ENCODE measurements at regions of chr6 and their contacts with region 1.

Region 1: DNA sequence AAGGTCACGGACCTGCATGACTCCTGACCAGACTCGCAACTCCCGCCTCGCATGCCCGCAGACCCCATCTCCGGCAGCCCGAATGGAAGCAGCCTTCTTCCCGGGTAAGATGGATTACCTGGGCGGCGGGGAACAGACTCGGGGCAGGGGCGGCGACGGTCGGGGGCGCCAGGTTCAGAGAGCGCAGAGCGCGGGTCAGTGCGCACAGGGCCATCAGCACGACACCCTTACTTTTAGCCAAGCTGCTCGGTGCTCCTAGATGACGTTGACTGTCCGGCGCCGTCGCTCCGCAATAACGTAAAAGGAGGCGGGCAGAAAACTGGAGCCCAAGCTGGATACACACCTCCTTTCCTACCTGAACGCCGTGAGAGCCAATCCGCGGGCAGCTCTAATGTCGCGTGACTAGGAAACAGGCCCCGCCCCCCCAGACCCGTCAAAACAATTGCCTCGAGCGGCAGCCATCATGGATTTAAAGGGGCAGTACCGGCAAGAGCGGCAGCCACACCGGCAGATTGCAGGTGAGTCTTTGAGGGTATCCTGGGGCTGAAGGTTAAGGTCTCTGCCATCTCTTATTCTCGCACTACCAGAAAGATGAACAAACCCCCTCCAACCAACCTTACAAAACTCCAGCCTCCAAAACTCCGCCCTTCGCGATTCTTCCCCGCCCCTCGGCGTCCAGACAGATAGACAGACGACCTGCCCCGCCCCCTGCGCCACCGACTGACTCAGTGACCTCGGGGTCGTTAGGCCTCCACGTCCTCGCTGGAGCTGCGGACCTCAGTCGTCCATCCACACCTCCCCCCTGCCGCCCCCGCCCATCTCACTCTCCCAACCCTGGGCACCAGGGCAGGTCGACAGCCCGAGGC is at the starts of genes KLC4 and MRPL2:
- DNase-seq: peak; percentile 99
- ATAC-seq: peak; percentile 82
- H3K4me3 ChIP-seq: peak within 1 kb of the TSS; percentile 74 to 99 (median 93)
- H3K27ac ChIP-seq: peak within 1 kb of the TSS; percentile 91
- H3K4me1 ChIP-seq: peaks cover 37% of the 10 kb centered on the region
- H3K27me3 ChIP-seq: no peaks in the 10 kb centered on the region; a peak in 1 of 5 replicates
- CTCF ChIP-seq: peak; percentile 11; the same call in 1 of the 2 replicates
- EP300 ChIP-seq: peak in 1 of 2 experiments; percentile 18; a peak in 1 of 4 replicates
- POLR2A ChIP-seq: peak in 1 of 2 experiments; percentile 93; a peak in 2 of 4 replicates
- RAD21 ChIP-seq: 0 out of 2 replicates have a peak, but pooled peaks have one; percentile 13
- total RNA-seq, gene KLC4: 45.4 and 45.8 TPM in 2 replicates
- total RNA-seq, gene MRPL2: 56.1 and 56.8 TPM in 2 replicates

Region 2: DNA sequence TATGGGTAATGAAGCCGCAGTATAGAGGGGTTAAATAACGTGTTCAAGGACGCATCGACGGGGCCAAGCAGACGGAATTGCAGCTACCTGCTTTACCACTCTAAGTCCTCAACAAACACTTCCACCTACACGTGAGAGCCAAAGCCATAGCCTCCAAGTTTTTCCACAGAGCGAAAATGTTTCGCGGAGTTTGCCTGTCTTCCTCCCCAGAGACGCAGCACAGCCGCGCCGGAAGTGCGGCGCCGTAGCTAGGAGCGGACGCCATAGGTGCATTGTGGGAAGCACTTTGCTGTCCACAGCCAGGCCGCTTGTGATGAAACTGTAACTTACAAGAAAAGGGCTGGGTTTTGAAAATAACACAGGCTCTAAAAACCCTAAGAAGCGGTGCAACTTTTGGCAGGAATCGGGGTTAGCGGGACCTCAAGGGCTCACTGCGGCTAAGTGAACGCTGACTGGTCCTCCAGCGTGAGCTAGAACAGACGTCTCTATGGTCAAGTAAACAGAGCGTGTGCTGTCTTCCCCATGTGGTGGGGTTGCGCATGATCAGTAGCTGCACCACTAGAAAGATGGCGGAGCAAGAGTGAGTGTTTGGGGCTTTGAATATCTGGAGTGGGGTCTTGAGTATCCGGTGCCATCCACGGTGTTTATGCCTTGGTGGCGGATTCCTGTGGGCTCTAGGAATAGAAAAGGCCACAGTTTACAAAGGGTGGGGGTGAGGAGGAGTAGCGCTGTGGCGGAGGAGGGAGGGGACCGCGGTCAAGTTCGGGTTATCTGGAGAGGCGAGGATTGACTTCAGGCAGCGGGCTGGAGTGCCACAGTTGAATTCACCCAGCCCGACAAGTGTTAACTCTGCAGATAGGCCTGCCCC is 179.8 kb before region 1 on chr6 and contains the start of gene RPL7L1:
- CTCF ChIA-PET with region 1: no interaction called
- POLR2A ChIA-PET with region 1: interaction called, 12 read pairs
- in situ Hi-C with region 1: no loop called
- intact Hi-C with region 1: no loop called
- DNase-seq: peak; percentile 95
- ATAC-seq: peak; percentile 94
- H3K4me3 ChIP-seq: peak within 1 kb of the TSS; percentile 85 to 92 (median 89)
- H3K27ac ChIP-seq: peak within 1 kb of the TSS; percentile 93
- H3K4me1 ChIP-seq: peaks cover 65% of the 10 kb centered on the region
- H3K27me3 ChIP-seq: no peaks in the 10 kb centered on the region; a peak in 1 of 5 replicates
- CTCF ChIP-seq: no peak; the same call in none of the 2 replicates
- EP300 ChIP-seq: peak; percentile 17 to 20; a peak in 2 of 4 replicates
- POLR2A ChIP-seq: peak; percentile 92 to 98
- RAD21 ChIP-seq: peak; percentile 25; the same call in 1 of the 2 replicates
- total RNA-seq, gene RPL7L1: 179 and 228 TPM in 2 replicates

Region 3: GRCh38 chr6:42963855-42964605 is 95.4 kb before region 1 on chr6:
- CTCF ChIA-PET with region 1: no interaction called
- POLR2A ChIA-PET with region 1: interaction called, 11 read pairs
- in situ Hi-C with region 1: no loop called
- intact Hi-C with region 1: no loop called
- DNase-seq: peak; percentile 76
- ATAC-seq: peak; percentile 44
- H3K4me3 ChIP-seq: no peak overlapping the region
- H3K27ac ChIP-seq: no peak overlapping the region
- H3K4me1 ChIP-seq: peaks cover 35% of the 10 kb centered on the region
- H3K27me3 ChIP-seq: no peaks in the 10 kb centered on the region; a peak in 1 of 5 replicates
- CTCF ChIP-seq: peak; percentile 72
- EP300 ChIP-seq: no peak
- POLR2A ChIP-seq: no peak
- RAD21 ChIP-seq: peak; percentile 62

Region 4: DNA sequence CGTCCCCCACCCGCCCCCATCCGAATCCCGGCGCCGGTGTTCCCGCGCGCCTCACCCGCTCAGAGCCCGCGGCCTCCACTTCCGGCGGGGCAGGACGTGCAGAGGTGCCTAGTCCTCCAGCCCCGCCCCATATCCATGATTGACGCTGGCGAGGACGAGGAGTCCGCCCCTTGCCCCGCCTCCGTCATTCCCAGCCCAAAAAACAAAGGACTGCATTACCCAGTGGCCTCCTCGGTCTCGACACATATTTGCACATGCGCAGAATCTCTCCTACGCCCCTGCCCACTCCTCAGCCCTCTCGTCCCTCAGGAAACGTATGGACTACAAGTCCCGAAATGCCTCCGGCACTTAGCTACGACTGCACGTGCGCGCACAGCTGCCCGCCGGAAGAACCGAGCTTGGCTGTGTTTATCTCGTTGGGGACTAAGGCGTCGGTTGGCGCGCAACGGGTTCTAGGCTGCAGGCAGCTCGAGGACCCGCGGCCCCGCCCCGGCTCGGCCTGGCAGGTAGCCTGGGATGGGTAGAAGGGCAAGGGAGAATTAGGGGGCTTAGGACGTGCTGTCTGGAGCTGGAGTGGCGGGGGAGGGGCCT is 45.5 kb before region 1 on chr6 and contains the starts of genes KLHDC3 and MEA1:
- CTCF ChIA-PET with region 1: no interaction called
- POLR2A ChIA-PET with region 1: interaction called, 76 read pairs
- in situ Hi-C with region 1: no loop called
- intact Hi-C with region 1: loop called (anchors 2 kb)
- DNase-seq: peak; percentile 100
- ATAC-seq: peak; percentile 94
- H3K4me3 ChIP-seq: peak within 1 kb of the TSS; percentile 88 to 93 (median 91)
- H3K27ac ChIP-seq: peak within 1 kb of the TSS; percentile 44
- H3K4me1 ChIP-seq: peaks cover 38% of the 10 kb centered on the region
- H3K27me3 ChIP-seq: no peaks in the 10 kb centered on the region; a peak in 1 of 5 replicates
- CTCF ChIP-seq: no peak
- EP300 ChIP-seq: no peak; a peak in 1 of 4 replicates
- POLR2A ChIP-seq: peak in 1 of 2 experiments; percentile 68; a peak in 2 of 4 replicates
- RAD21 ChIP-seq: no peak
- total RNA-seq, gene KLHDC3: 91.5 and 92.5 TPM in 2 replicates
- total RNA-seq, gene MEA1: 86.2 and 110 TPM in 2 replicates

Region 5: GRCh38 chr6:43070028-43070632 is 10.7 kb after region 1 on chr6:
- CTCF ChIA-PET with region 1: no interaction called
- POLR2A ChIA-PET with region 1: interaction called, 103 read pairs
- in situ Hi-C with region 1: no loop called
- intact Hi-C with region 1: no loop called
- DNase-seq: peak; percentile 83
- ATAC-seq: peak; percentile 93
- H3K4me3 ChIP-seq: no peak overlapping the region
- H3K27ac ChIP-seq: peak overlapping the region; percentile 7
- H3K4me1 ChIP-seq: peaks cover 12% of the 10 kb centered on the region
- H3K27me3 ChIP-seq: no peaks in the 10 kb centered on the region
- CTCF ChIP-seq: peak; percentile 72
- EP300 ChIP-seq: no peak
- POLR2A ChIP-seq: no peak
- RAD21 ChIP-seq: peak; percentile 83

Region 6: GRCh38 chr6:43096451-43097097 is 37.2 kb after region 1 on chr6:
- CTCF ChIA-PET with region 1: no interaction called
- POLR2A ChIA-PET with region 1: interaction called, 22 read pairs
- in situ Hi-C with region 1: no loop called
- intact Hi-C with region 1: no loop called
- DNase-seq: no peak
- ATAC-seq: peak; percentile 46
- H3K4me3 ChIP-seq: peak overlapping the region in 2 of 3 experiments; percentile 9 to 42; a peak in 1 of 6 replicates
- H3K27ac ChIP-seq: peak overlapping the region; percentile 41
- H3K4me1 ChIP-seq: peaks cover 64% of the 10 kb centered on the region
- H3K27me3 ChIP-seq: no peaks in the 10 kb centered on the region; a peak in 1 of 5 replicates
- CTCF ChIP-seq: no peak
- EP300 ChIP-seq: no peak
- POLR2A ChIP-seq: no peak
- RAD21 ChIP-seq: no peak

Region 7: DNA sequence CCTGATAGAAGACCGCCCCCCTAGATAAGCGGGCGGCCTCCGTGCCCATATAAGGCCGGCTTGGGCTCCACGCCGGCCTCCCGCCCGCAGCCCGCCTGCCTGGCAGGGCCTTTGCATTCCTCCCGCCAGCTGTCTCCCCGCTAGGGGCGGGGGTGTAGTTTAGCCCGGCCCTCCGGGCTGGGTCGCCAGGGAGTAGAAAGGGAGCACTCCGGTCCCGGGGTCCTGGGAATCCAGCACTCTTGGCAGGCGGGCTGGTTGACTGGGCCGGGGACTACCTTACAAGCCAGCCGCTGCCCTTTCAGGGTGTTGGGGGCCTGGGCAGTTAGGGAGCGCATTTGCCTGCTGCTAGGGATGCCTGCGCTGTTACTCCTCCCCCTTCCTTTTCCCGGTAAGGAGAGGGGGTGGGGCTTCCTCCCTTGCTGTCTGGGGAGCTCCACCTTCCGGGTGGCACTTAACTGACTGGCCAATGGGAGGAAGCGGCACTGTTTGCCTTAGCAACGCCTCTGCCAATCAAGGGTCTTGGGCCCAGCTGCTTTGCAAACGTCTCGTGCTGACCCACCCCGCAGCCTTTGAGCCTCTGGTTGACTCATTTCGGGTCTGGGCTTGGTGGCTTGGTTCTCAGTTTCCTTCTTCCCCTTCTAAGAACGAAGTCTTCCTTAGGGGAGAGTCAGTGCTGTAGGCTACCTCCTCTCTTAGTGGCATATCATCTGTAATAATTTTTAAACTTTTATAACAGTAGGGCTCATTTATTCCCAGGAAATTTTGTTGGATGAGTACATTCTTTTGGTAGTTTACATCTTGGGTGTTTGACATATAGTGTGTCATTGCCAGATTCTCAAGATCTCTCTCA is 115.1 kb after region 1 on chr6:
- CTCF ChIA-PET with region 1: no interaction called
- POLR2A ChIA-PET with region 1: interaction called, 16 read pairs
- in situ Hi-C with region 1: no loop called
- intact Hi-C with region 1: no loop called
- DNase-seq: peak; percentile 99
- ATAC-seq: peak; percentile 76
- H3K4me3 ChIP-seq: peak overlapping the region; percentile 3 to 97 (median 95); a peak in 4 of 6 replicates
- H3K27ac ChIP-seq: peak overlapping the region; percentile 57
- H3K4me1 ChIP-seq: peaks cover 37% of the 10 kb centered on the region
- H3K27me3 ChIP-seq: no peaks in the 10 kb centered on the region; a peak in 1 of 5 replicates
- CTCF ChIP-seq: peak; percentile 39
- EP300 ChIP-seq: no peak
- POLR2A ChIP-seq: peak in 1 of 2 experiments; percentile 60; a peak in 1 of 4 replicates
- RAD21 ChIP-seq: peak; percentile 49; the same call in 1 of the 2 replicates

Measured in HepG2 (cell line).